ENCODE measurements at regions of chr5 and their contacts with region 1.

Region 1: GRCh38 chr5:73540192-73540591 is 25.2 kb downstream of the ANKRA2 start:
- H3K4me3 Mint-ChIP-seq: no peak overlapping the region
- H3K27ac Mint-ChIP-seq: no peak overlapping the region
- H3K4me1 Mint-ChIP-seq: no peaks in the 10 kb centered on the region
- H3K27me3 Mint-ChIP-seq: peaks cover 28% of the 10 kb centered on the region

Region 2: DNA sequence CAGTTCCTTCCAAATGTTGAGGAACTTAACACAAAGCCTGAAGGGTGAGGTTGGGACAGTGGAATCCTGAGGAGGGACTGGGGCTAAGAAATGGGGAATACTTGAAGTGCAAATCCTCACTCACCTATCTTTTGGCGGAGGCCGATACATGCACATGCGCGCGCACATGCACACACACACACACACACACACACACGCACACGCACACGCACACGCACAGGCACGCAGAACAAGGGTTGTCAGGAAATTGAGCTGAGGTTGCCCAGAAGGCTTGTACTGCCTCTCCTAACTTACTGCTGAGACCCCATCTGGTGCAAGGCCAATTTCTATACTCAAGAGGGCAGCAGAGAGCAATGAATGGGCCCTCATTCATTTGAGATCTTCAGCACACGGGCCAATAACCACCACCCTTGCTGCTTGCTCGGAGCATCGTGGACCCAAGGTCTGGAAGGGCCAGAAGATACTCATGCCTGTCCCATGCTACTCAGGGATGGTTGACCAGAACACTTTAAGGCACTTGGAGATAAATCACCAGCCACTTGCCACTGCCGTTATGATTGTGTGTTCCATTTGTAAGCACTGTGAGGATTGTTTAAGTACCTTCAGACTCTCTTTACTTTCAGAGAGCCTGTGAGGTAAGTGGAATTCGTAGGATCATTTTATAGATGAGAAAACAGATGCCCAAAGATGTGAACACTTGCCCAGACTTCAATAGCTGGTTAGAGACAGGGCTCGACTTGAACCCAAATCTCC is 20.5 kb before region 1 on chr5:
- intact Hi-C with region 1: loop called (anchors 1 kb)
- H3K4me3 Mint-ChIP-seq: no peak overlapping the region
- H3K27ac Mint-ChIP-seq: no peak overlapping the region
- H3K4me1 Mint-ChIP-seq: peaks cover 8% of the 10 kb centered on the region
- H3K27me3 Mint-ChIP-seq: no peaks in the 10 kb centered on the region